Activated naive CD4-positive, alpha-beta T cell treated with anti-CD3 and anti-CD28 coated beads for 36 hours (primary cell): ENCODE measurements at regions of chr17 and their contacts with region 1.

Region 1: GRCh38 chr17:39461113-39461925 is at the start of gene CDK12:
- DNase-seq: peak; percentile 98
- H3K4me3 Mint-ChIP-seq: peak within 1 kb of the TSS; percentile 82
- H3K27ac Mint-ChIP-seq: peak within 1 kb of the TSS; percentile 89
- H3K4me1 Mint-ChIP-seq: peaks cover 29% of the 10 kb centered on the region
- H3K27me3 Mint-ChIP-seq: no peaks in the 10 kb centered on the region
- total RNA-seq, gene CDK12: 49.8 to 51.0 TPM

Region 2: DNA sequence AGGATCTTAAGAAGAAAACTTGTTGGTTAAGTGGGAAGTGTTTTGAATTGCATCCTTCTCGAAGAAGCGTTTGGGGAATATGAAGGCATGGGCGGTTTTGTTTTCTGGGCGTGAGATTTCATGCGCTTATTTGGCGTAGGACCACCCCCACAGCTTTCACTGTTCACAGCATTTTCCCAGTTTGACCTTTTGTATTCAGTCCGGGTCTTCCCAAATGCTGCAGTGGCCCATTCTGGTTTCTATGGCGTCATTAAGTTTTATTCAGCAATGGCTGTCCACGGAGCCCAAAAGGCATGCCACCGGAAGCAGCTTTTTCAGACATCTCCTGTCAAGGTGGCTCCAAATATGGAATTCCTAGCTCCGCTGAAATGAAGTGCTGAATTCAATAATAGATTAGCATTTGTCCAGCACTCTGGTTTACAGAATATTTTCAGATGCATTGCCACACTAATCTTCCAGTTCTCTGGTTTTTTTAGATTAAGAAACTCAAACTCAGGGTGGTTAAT is 403.6 kb before region 1 on chr17:
- CTCF ChIA-PET with region 1: no interaction called
- intact Hi-C with region 1: loop called (anchors 2 kb)
- DNase-seq: no peak
- H3K4me3 Mint-ChIP-seq: peak overlapping the region; percentile 84
- H3K27ac Mint-ChIP-seq: no peak overlapping the region
- H3K4me1 Mint-ChIP-seq: peaks cover 13% of the 10 kb centered on the region
- H3K27me3 Mint-ChIP-seq: no peaks in the 10 kb centered on the region

Region 3: GRCh38 chr17:39199820-39200069 is 261.6 kb before region 1 on chr17:
- CTCF ChIA-PET with region 1: no interaction called
- intact Hi-C with region 1: loop called (anchors 2 kb)
- DNase-seq: peak; percentile 94
- H3K4me3 Mint-ChIP-seq: peak overlapping the region; percentile 86
- H3K27ac Mint-ChIP-seq: peak overlapping the region; percentile 99
- H3K4me1 Mint-ChIP-seq: peaks cover 50% of the 10 kb centered on the region
- H3K27me3 Mint-ChIP-seq: no peaks in the 10 kb centered on the region

Region 4: DNA sequence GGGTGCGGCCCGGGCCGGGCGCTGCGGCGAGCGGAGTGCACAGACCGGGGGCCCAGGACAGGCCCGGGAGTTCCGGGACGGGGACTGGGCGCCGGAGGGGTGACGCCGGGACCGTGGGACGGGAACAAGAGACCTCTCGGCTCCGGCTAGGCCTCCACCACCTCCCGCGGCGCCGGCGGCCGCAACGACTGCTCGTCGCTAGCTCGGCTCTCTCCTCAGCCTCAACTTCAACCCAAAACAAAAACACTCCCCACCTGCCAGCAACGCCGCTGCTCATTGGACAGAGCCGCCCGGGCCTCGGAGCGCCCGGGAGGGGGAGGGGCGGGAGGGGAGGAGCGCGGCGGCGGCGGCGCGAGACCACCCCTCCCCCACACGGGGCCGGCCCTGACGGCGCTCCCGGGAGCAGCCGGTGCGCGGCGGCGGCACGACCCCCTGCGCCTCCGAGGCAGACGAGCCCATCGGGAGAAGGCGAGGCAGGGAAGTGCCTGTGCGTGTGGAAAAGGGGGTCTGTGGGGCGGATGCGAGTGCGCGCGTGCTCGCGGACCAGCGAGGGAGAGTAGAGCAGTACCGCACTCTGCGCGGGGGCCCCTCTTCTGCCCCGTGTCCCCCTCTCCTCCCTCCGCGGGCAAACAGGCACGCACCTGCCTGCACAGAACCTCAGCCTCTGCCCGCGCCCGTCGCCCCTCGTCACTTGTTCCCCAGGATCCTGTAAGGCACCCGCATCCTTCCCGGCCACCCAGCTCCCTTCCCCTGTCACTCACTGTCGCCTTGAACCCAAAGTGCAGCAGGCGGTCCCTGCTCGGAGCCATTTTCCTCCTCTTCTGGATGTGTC is 59.7 kb before region 1 on chr17 and contains the start of gene FBXL20:
- CTCF ChIA-PET with region 1: interaction called, 3 read pairs
- intact Hi-C with region 1: loop called (anchors 1 kb)
- DNase-seq: peak; percentile 96
- H3K4me3 Mint-ChIP-seq: peak within 1 kb of the TSS; percentile 91
- H3K27ac Mint-ChIP-seq: peak within 1 kb of the TSS; percentile 90
- H3K4me1 Mint-ChIP-seq: peaks cover 61% of the 10 kb centered on the region
- H3K27me3 Mint-ChIP-seq: no peaks in the 10 kb centered on the region
- total RNA-seq, gene FBXL20: 14.2 to 15.4 TPM

Region 5: DNA sequence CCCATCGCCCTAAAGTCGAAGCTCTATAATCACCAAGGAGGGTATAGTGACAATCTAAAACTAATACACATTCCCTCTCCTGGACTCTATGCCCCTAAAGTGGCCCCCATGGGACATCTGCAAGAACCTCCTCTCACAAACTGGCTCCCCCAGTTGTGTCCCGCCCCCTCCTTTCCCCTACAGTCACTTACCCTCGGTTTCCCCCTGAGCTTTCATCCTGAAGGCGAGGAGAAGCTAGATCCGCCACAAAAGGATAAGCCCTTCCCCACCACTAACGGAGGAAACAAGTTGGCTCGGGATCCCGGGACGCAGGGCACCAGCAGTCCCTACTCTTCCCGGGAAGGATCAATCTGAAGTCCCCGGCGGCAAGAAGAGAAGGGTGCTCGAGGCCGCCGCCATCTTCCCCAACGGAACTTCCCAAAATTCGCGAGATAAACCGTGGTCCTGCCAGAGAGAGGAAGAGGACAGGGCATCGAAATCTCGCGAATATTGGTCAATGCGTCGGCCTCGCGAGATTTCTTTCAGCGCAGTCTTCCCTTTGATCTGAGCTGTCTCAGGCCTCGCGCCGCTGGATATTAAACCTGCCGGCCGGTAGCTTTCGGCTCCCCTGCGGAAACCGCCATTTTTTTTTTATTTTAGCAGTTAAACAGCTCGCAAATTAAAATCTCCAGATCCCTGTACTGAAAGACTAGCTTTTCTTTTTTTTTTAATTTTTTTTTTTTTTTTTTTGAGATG is 10.3 kb before region 1 on chr17 and contains the start of gene MED1:
- CTCF ChIA-PET with region 1: interaction called, 6 read pairs
- intact Hi-C with region 1: loop called (anchors 1 kb)
- DNase-seq: peak; percentile 96
- H3K4me3 Mint-ChIP-seq: peak within 1 kb of the TSS; percentile 95
- H3K27ac Mint-ChIP-seq: peak within 1 kb of the TSS; percentile 95
- H3K4me1 Mint-ChIP-seq: peaks cover 42% of the 10 kb centered on the region
- H3K27me3 Mint-ChIP-seq: no peaks in the 10 kb centered on the region
- total RNA-seq, gene MED1: 52.4 to 56.1 TPM

Region 6: DNA sequence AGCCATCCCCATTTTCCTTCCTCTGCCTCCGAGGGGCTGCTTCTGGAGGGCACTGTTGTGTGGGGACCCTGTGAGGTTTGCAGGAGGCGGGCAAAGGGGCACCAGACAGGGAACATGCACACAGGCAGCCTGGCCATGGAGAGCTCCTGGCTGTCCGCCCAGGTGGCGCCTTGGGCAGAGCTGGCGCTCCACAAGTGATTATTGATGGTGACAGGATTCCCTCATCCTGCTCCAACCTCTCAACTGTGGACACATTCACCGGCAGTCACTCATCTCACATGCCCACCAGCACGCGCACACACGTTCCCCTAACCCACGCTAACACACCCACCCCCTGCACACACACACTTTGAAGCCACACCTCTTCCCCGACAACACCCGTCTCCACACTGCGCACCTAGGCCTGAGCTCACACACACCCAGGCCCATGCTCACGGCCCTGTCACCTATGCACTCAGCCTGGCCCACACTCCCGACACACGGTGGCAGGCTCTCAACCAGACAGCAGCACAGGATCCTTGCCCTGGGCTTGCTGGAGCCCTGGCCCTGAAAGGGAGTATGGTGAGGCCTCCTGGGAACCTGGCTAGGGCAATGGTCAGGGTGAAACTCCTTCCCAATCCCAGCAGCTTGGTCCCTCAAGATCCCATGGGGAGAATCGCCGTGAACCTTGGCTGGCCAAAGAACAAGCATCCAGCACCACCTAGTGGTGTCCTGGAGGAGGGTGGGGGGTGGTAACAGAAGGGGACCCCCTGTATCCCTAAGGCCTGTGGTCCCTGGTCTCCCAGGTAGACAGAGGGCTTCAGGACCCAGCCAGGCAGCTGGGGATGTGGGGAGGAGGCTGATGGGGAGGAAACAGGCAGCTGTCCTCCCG is 210.6 kb after region 1 on chr17:
- CTCF ChIA-PET with region 1: no interaction called
- intact Hi-C with region 1: no loop called
- DNase-seq: no peak
- H3K4me3 Mint-ChIP-seq: no peak overlapping the region
- H3K27ac Mint-ChIP-seq: no peak overlapping the region
- H3K4me1 Mint-ChIP-seq: peaks cover 21% of the 10 kb centered on the region
- H3K27me3 Mint-ChIP-seq: peaks cover 10% of the 10 kb centered on the region

Region 7: GRCh38 chr17:39687811-39688518 is 226.6 kb after region 1 on chr17 and contains the start of gene PGAP3:
- CTCF ChIA-PET with region 1: no interaction called
- intact Hi-C with region 1: loop called (anchors 1 kb)
- DNase-seq: peak; percentile 89
- H3K4me3 Mint-ChIP-seq: peak within 1 kb of the TSS; percentile 98
- H3K27ac Mint-ChIP-seq: peak within 1 kb of the TSS; percentile 94
- H3K4me1 Mint-ChIP-seq: peaks cover 15% of the 10 kb centered on the region
- H3K27me3 Mint-ChIP-seq: no peaks in the 10 kb centered on the region
- total RNA-seq, gene PGAP3: 11.8 to 11.9 TPM